GM13977 (cell line): ENCODE measurements at regions of chr17 and their contacts with region 1.

Region 1: GRCh38 chr17:75749545-75750389 is 15.2 kb downstream of the GALK1 start:
- DNase-seq: peak; percentile 90
- CTCF ChIP-seq: peak; percentile 90

Region 2: GRCh38 chr17:75459590-75460267 is 290.0 kb before region 1 on chr17:
- in situ Hi-C with region 1: no loop called
- DNase-seq: no peak
- CTCF ChIP-seq: no peak

Region 3: DNA sequence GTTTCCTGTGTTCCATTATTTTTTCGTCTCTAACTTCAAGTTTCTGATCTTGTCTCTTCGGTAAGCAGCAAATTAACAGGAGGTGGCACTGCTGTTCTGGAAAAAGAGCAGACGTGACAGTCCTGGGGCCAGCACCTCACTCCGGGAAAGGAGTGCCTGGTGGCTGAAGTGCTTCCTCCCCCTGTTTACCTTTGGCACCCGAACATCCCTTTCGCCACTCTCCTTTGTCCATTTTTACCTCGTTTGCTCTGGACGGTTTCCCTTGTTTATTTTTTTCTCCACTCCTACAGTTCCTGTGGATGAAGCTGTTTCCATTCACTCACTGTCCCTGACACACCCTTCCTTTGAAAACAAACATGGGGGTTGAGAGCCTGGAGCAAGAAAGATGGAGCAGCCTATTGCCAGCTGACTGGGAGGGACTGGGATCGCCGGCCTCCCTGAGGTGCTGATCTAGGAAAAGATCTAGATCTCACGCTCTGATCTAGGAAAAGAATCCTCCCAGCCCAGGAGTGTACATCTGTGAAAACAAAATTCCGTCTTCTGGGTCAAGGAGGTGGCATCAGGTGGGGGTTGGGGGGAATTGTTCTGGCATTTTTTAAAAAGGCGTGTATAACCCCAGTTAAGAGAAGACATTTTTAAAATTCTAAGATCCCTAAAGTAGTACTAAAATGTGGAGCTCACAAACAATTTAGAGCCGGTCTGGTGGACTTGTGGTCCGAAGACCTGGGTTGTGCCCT is 69.9 kb before region 1 on chr17:
- in situ Hi-C with region 1: loop called (anchors 10 kb)
- DNase-seq: no peak
- CTCF ChIP-seq: no peak